Mammary epithelial cell (primary cell): ENCODE measurements at regions of chr1 and their contacts with region 1.

Region 1: GRCh38 chr1:22821012-22821411 is 110.4 kb downstream of the EPHB2 start:
- DNase-seq: no peak
- H3K4me3 ChIP-seq: no peak overlapping the region
- H3K27ac ChIP-seq: no peak overlapping the region
- H3K4me1 ChIP-seq: peaks cover 15% of the 10 kb centered on the region
- H3K27me3 ChIP-seq: no peaks in the 10 kb centered on the region
- CTCF ChIP-seq: no peak

Region 2: GRCh38 chr1:22739648-22740385 is 81.2 kb before region 1 on chr1:
- CTCF ChIA-PET with region 1: no interaction called
- dilution Hi-C with region 1: loop called (anchors 5 kb)
- in situ Hi-C with region 1: no loop called
- intact Hi-C with region 1: no loop called
- DNase-seq: no peak
- H3K4me3 ChIP-seq: no peak overlapping the region
- H3K27ac ChIP-seq: no peak overlapping the region
- H3K4me1 ChIP-seq: no peaks in the 10 kb centered on the region
- H3K27me3 ChIP-seq: no peaks in the 10 kb centered on the region
- CTCF ChIP-seq: no peak

Region 3: DNA sequence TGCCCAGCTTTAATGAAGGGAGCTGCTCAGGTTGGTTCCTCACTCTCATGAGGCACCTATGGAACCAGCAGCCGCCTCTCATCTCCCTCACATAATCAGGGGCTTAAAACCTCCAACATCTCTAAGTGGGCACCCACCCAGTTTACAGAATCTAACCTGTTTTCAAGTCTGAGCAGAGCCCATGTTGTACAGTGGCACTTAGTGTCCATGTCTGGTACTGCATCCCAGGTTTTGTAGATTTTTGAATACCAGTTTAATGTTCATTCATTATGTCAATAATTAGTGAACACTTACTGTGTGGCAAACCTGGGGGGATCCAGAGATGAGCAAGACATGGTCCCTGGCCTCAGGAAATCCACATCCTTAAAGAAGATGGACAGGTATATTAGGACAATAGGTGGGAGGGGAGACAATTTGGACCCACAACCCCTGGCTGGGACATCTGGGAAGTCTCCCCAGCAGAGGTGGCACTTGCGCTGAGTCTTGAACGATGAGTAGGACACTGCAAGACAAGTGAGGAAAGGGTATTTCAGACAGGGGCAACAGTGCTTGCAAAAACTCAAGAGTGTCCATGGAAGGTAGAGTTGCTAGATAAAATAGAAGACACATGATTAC is 68.3 kb after region 1 on chr1:
- CTCF ChIA-PET with region 1: no interaction called
- dilution Hi-C with region 1: no loop called
- in situ Hi-C with region 1: no loop called
- intact Hi-C with region 1: no loop called
- DNase-seq: no peak
- H3K4me3 ChIP-seq: no peak overlapping the region
- H3K27ac ChIP-seq: no peak overlapping the region
- H3K4me1 ChIP-seq: no peaks in the 10 kb centered on the region
- H3K27me3 ChIP-seq: no peaks in the 10 kb centered on the region
- CTCF ChIP-seq: peak; percentile 83 to 91